Common myeloid progenitor, CD34-positive (primary cell): ENCODE measurements at regions of chr5 and their contacts with region 1.

Region 1: GRCh38 chr5:67209142-67209771 is 12.7 kb upstream of the CD180 start:
- DNase-seq: peak; percentile 80 to 84 (median 83)
- H3K4me3 ChIP-seq: no peak overlapping the region
- H3K27ac ChIP-seq: no peak overlapping the region
- H3K4me1 ChIP-seq: peaks cover 15 to 50% (median 35%) of the 10 kb centered on the region in 4 experiments
- H3K27me3 ChIP-seq: no peaks in the 10 kb centered on the region

Region 2: DNA sequence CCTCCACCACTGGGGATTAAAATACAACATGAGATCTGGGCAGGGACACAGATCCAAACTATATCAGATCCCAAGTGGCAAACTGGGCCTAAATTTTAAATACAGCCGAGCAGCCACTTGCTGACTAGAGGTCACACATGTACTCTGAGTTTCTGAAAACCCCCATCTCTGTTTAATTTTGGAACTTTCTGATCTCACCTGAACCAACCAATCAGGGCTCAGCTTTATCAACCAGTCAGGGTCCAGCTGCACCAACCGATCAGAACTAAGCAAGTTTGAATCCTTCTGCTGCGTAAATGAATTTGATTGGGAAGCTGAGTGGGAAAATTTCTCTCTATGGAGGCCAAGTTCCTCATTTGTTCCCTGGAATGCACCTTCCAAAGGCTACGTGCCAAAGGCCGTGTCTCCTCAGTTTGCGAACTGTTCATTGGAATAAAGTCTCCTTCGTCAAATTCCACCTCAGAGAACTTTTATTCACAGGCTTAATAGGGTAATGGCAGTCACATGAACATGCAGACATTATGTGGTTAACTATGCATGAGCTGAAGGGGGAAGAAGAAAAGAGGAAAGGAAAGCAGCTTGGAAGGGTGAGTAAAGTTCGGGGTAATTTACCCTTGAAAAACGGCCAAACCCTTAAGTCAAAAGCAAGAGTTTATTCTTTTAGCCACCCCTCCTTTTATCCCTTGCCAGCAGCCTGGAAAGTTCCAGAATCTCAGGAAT is 16.4 kb before region 1 on chr5:
- CTCF ChIA-PET with region 1: interaction called, 19 read pairs
- POLR2A ChIA-PET with region 1: no interaction called
- DNase-seq: peak in 2 of 3 donors; percentile 69 to 78
- H3K4me3 ChIP-seq: peak overlapping the region in 2 of 7 experiments; percentile 23 to 38
- H3K27ac ChIP-seq: peak overlapping the region in 1 of 2 experiments; percentile 58
- H3K4me1 ChIP-seq: peaks cover 6 to 67% (median 37%) of the 10 kb centered on the region in 4 experiments
- H3K27me3 ChIP-seq: no peaks in the 10 kb centered on the region

Region 3: DNA sequence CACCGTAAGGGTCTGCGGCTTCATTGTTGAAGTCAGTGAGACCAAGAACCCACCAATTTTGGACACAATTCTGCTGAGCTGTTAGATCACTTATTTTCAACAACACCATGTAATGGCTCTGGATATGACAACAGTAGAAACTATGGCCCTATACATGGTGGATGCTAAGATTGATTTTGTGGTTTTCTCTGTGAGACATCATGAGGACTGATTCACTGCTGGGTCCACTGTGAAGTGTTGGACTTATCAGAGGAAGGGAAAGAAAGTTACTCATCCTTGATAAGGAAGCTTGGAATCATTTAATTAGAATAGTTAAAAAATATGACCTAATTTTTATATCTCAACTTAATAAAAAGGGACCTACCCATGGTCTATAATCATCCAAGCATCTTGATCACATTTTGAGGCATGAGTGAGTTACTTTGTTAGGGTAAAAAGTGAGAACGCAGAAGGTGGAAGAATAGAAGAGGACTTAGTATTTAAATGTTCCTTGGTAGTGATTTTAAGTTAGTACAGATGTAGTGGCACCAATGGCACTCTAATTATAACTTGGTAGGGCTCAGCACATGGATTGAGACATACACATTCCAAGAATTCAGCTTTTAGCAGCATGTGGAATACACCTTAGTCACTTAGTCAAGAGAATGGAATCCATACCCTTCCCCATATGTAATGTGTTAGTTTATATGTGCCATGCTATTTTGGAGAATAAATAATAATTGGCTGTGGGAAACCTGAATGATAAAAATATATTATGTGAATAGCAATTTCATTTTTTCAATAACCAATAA is 110.9 kb after region 1 on chr5:
- CTCF ChIA-PET with region 1: no interaction called
- POLR2A ChIA-PET with region 1: no interaction called
- DNase-seq: no peak
- H3K4me3 ChIP-seq: no peak overlapping the region
- H3K27ac ChIP-seq: no peak overlapping the region
- H3K4me1 ChIP-seq: no peaks in the 10 kb centered on the region
- H3K27me3 ChIP-seq: no peaks in the 10 kb centered on the region